Activated CD4-positive, alpha-beta T cell treated with anti-CD3 and anti-CD28 coated beads for 36 hours (primary cell): ENCODE measurements at regions of chr17 and their contacts with region 1.

Region 1: GRCh38 chr17:35587074-35587971 is at the start of gene AP2B1:
- DNase-seq: peak; percentile 96
- ATAC-seq: peak; percentile 94
- H3K4me3 Mint-ChIP-seq: peak within 1 kb of the TSS; percentile 98
- H3K27ac Mint-ChIP-seq: peak within 1 kb of the TSS; percentile 98
- H3K4me1 Mint-ChIP-seq: peaks cover 25% of the 10 kb centered on the region
- H3K27me3 Mint-ChIP-seq: no peaks in the 10 kb centered on the region
- total RNA-seq, gene AP2B1: 166 to 184 TPM

Region 2: DNA sequence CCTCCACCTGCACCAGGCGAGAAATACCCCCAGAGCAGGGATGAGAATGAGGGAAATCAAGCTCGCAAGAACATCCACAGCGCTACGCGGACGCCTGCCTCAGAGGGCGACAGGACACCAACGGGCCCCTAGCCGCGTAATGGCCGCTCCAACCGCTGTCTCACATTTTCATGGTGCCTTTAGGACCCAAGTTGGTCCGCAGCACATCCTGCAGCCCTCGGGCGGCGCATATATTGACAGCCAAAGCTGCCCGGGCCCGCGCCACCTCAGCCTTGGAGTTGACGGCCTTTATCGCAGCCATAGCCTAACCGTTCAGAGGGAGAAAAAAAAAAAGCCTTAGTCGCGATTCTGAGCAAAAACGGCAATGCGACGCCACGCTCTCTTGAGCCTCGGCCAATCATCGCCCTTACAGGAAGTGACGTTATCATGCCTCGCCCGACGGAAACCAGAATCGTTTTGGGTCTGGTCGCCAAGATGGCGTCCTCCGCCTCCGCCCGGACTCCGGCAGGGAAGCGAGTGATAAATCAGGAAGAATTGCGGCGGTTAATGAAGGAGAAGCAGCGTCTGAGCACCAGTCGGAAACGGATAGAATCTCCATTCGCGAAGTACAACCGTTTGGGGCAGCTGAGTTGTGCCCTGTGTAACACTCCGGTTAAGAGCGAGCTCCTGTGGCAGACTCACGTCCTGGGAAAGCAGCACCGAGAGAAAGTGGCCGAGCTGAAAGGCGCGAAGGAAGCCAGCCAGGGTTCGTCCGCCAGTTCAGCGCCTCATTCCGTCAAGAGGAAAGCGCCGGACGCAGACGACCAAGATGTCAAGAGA is 626.0 kb before region 1 on chr17 and contains the starts of genes CCT6B and ZNF830:
- CTCF ChIA-PET with region 1: no interaction called
- POLR2A ChIA-PET with region 1: no interaction called
- intact Hi-C with region 1: loop called in 1 of 2 experiments (anchors 1 kb)
- DNase-seq: peak; percentile 95
- ATAC-seq: peak; percentile 91
- H3K4me3 Mint-ChIP-seq: peak within 1 kb of the TSS; percentile 99
- H3K27ac Mint-ChIP-seq: peak within 1 kb of the TSS; percentile 100
- H3K4me1 Mint-ChIP-seq: peaks cover 26% of the 10 kb centered on the region
- H3K27me3 Mint-ChIP-seq: no peaks in the 10 kb centered on the region
- total RNA-seq, gene CCT6B: 0.95 to 1.6 TPM
- total RNA-seq, gene ZNF830: 20.0 TPM

Region 3: DNA sequence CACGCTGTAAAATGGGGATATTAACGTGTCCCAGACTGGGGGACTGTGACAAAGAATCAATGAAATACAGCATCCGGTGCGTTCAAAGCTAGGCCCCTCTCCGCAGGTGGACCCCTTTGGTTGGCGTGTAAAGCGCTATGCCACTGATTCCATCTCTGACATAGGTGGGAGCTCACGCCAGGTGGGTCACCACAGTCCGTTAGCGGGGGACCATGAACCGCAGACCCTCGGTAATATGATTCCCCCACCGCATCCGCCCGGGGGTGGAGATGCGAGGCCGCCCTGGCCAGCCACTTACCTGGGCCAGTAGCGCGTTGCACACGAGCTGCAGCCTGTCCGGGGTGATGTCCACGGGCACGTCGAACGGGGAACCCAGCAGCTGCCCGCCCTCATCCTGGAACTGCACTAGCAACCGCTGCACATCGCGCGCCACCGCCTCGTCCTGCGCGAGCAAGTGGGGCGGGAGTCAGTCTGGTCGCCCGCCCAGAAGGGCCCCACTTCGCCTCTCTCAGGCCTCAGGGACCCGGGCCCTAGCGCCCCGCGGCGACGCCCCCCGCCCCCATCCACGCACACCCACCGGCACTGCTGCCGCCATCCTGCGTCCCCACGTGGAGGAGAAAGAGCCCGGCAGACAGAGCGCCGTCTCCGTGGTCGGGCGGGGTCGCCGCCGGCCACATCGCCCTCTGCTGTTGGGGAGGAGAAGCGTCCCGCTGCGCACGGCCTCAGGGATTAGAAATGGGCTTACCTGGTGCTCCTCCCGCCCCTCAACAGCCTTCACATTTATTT is 445.4 kb before region 1 on chr17 and contains the start of gene NLE1:
- CTCF ChIA-PET with region 1: no interaction called
- POLR2A ChIA-PET with region 1: no interaction called
- intact Hi-C with region 1: loop called in 1 of 2 experiments (anchors 1 kb)
- DNase-seq: peak; percentile 94
- ATAC-seq: peak; percentile 93
- H3K4me3 Mint-ChIP-seq: peak within 1 kb of the TSS; percentile 80
- H3K27ac Mint-ChIP-seq: peak within 1 kb of the TSS; percentile 81
- H3K4me1 Mint-ChIP-seq: peaks cover 14% of the 10 kb centered on the region
- H3K27me3 Mint-ChIP-seq: no peaks in the 10 kb centered on the region
- total RNA-seq, gene NLE1: 38.1 to 40.6 TPM

Region 4: GRCh38 chr17:35373534-35373983 is 213.8 kb before region 1 on chr17 and contains the start of gene SLFN11:
- CTCF ChIA-PET with region 1: interaction called, 4 read pairs
- POLR2A ChIA-PET with region 1: no interaction called
- intact Hi-C with region 1: loop called in 1 of 2 experiments (anchors 2 kb)
- DNase-seq: peak; percentile 95
- ATAC-seq: peak; percentile 70
- H3K4me3 Mint-ChIP-seq: peak within 1 kb of the TSS; percentile 85
- H3K27ac Mint-ChIP-seq: peak within 1 kb of the TSS; percentile 98
- H3K4me1 Mint-ChIP-seq: peaks cover 50% of the 10 kb centered on the region
- H3K27me3 Mint-ChIP-seq: peaks cover 1% of the 10 kb centered on the region
- total RNA-seq, gene SLFN11: 63.7 to 67.9 TPM

Region 5: DNA sequence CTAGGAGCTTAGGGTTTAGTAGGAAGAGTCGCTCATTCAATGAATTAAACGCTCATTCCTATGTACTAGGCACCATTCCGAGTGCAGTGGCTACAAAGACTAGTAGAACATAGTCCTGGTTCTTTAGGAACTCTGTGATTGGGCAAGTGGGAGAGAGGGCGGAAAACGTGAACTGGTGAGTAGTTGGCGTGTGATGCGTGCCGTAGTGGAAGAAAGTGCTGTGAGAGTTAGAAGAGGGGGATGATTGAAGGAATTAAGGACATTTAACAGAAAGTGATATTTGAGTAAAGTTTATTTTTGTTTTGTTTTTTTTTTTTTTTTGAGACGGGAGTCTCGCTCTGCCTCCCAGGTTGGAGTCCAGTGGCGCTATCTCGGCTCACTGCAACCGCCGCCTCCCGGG is 18.8 kb before region 1 on chr17:
- CTCF ChIA-PET with region 1: no interaction called
- POLR2A ChIA-PET with region 1: no interaction called
- intact Hi-C with region 1: loop called (anchors 1 kb)
- DNase-seq: peak; percentile 75
- ATAC-seq: peak; percentile 58
- H3K4me3 Mint-ChIP-seq: peak overlapping the region; percentile 95
- H3K27ac Mint-ChIP-seq: peak overlapping the region; percentile 86
- H3K4me1 Mint-ChIP-seq: peaks cover 25% of the 10 kb centered on the region
- H3K27me3 Mint-ChIP-seq: no peaks in the 10 kb centered on the region